Activated CD4-positive, alpha-beta T cell treated with anti-CD3 and anti-CD28 coated beads, Interleukin-2, amount 10 ng/mL, durations not matched to agents 7 days and 5 days (primary cell): ENCODE measurements at regions of chr19 and their contacts with region 1.

Region 1: DNA sequence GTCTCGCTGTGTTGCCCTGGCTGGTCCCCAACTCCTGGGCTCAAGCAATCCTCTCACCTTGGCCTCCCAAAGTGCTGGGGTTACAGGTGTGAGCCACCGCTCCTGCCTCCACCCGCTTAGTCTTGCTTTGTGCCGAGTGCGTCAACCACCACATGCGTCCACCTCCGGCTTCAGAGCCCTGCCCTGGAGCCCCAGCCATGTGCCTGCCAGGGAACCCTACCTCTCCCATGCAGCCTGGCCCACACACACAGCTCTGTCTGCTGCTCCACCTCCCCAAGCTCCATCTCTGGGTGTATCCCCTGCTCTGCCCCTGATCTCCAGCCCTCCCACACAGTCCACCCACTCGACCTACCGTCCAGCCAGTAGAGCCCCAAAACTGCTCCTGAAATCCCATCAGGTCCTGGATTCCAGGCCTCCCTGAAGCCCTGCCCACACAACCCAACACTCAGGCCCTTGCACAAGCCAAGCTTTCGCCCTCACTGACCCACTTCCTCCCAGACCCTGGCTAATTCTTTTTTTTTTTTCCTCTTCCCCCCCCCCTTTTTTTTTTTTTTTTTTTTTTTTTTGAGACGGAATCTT is 9.6 kb downstream of the CYP2F1 start:
- DNase-seq: no peak
- H3K4me3 Mint-ChIP-seq: no peak overlapping the region
- H3K27ac Mint-ChIP-seq: peak overlapping the region; percentile 3
- H3K4me1 Mint-ChIP-seq: peaks cover 42% of the 10 kb centered on the region
- H3K27me3 Mint-ChIP-seq: peaks cover 5% of the 10 kb centered on the region

Region 2: DNA sequence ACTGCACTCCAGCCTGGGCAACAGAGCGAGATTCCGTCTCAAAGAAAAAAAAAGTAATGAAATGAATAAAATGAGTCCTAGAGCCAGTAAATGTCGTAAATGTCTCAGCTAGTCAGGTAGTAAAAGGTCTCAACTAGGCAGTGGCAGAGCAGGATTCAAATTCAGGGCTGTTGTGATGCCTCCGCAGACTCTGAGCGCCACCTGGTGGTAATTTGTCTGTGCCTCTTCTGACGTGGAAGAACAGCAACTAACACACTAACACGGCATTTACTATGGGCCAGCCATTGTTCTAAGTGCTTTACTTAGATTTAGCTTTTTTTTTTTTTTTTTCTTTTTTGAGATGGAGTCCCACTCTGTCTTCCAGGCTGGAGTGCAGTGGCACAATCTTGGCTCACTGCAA is 20.6 kb after region 1 on chr19:
- CTCF ChIA-PET with region 1: interaction called, 10 read pairs
- POLR2A ChIA-PET with region 1: no interaction called
- DNase-seq: peak; percentile 93
- H3K4me3 Mint-ChIP-seq: no peak overlapping the region
- H3K27ac Mint-ChIP-seq: no peak overlapping the region
- H3K4me1 Mint-ChIP-seq: peaks cover 2% of the 10 kb centered on the region
- H3K27me3 Mint-ChIP-seq: peaks cover 15% of the 10 kb centered on the region